Endothelial cell of umbilical vein (primary cell): ENCODE measurements at regions of chr3 and their contacts with region 1.

Region 1: DNA sequence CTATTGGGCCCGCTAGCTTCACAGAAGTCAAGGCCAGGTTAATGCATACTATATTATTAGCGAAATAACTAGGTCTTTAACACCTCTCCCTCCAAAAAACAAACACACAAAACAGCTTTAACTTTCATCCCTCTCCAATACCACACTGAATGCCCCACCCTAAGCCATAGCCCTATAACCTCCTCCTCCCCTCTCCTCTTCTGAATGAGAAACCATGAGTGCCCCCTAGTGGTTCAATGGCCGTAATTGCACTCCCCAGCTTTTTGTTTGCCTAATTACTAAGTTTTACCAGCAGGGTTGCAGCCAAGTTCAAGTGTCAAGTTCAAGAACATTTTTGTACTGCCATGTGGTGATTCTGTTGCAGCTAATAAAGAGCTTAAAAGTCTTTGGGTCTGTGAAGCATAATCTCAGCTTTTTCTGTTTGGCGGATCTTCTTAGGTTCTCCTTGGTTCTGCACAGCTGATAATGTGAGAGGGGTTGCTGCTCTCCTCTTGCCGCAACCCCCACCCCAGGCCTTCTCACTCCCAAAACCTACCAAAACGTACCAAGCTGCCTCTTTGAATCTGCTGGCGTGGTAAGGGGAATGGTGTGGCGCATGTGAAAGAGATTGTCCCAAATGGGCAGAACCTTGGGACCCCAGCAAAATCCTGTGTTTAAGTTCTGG is 57.9 kb downstream of the RPL22L1 start:
- DNase-seq: peak; percentile 86
- H3K4me3 ChIP-seq: no peak overlapping the region
- H3K27ac ChIP-seq: peak overlapping the region; percentile 51
- H3K4me1 ChIP-seq: peaks cover 35% of the 10 kb centered on the region
- H3K27me3 ChIP-seq: no peaks in the 10 kb centered on the region
- CTCF ChIP-seq: peak; percentile 80 to 92
- POLR2A ChIP-seq: no peak

Region 2: DNA sequence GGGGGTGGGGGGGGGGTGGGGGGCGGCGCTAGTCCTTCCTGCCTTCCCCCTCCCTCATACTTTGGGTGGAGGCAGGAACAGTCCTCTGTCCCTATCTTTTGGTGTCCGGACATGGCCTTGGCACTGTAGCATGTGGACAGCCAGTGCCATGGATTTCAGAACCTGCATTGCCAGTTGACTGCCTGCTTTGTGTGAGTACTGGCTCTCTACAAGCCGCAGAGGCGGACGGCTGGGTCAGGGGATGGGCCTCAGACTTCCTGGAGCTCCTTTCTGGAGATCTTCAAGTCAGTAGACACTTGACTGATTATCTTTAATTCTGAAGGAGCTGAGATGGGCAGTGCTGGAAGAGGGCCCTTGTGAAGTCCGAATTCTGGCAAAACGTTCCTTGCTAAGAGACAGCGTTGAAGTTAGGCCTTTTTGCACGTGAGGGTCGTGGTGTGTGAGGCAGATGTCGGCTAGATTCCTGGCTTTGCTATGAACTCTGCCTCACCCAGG is 390.9 kb before region 1 on chr3:
- CTCF ChIA-PET with region 1: interaction called, 525 read pairs
- POLR2A ChIA-PET with region 1: interaction called, 8 read pairs
- dilution Hi-C with region 1: no loop called
- intact Hi-C with region 1: loop called (anchors 1 kb)
- DNase-seq: peak; percentile 21
- H3K4me3 ChIP-seq: peak overlapping the region in 2 of 3 experiments; percentile 65 to 86
- H3K27ac ChIP-seq: peak overlapping the region; percentile 46
- H3K4me1 ChIP-seq: peaks cover 53% of the 10 kb centered on the region
- H3K27me3 ChIP-seq: no peaks in the 10 kb centered on the region
- CTCF ChIP-seq: no peak
- POLR2A ChIP-seq: peak; percentile 52

Region 3: DNA sequence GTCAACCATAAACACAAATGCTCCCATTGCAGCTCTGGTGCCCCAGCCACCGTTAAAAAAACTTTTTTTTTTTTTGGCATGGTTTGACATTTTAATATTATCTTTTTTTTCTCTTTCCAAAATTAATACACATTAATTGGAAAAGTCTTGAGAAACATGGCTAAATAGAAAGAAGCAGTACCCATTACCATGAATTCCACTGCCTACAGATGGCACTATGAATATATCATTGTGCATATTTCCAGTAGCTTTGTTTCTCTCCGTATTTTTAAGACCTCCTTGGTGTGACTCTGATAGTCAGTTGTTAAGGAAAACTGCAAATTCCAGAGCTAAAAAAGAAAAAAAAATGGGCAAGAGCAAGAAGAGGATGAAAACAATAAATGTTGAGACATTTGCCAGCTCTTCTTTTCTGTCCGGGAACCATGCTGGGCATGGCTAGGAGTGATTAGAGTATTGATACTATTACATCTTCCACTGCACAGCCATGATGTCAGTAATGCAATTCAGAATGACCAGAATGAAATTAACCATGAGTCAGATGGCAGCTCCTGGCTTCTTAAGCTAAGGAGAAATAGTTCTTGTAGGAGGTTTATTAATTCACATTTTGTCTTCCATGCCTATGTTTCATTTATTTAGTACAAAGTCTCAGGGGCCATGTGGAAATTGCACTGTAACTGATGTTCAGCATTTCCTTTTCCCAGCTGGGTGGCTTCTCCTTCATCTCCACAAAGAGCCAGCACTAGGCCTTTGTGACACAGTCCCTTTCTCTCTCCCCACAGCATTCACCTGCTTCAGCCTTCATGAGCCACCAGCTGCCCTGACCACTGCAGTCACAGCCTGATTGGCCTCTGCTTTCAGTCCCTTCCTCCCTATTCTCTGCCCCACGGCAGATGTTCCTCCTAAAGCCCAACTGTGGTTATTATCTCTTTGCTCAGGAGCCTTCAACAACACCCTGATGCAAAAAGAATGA is 258.0 kb before region 1 on chr3:
- CTCF ChIA-PET with region 1: interaction called, 63 read pairs
- POLR2A ChIA-PET with region 1: no interaction called
- dilution Hi-C with region 1: no loop called
- intact Hi-C with region 1: no loop called
- DNase-seq: peak; percentile 25
- H3K4me3 ChIP-seq: no peak overlapping the region
- H3K27ac ChIP-seq: no peak overlapping the region
- H3K4me1 ChIP-seq: no peaks in the 10 kb centered on the region
- H3K27me3 ChIP-seq: no peaks in the 10 kb centered on the region
- CTCF ChIP-seq: no peak
- POLR2A ChIP-seq: no peak

Region 4: GRCh38 chr3:170703121-170703588 is 108.9 kb before region 1 on chr3:
- CTCF ChIA-PET with region 1: interaction called, 11 read pairs
- POLR2A ChIA-PET with region 1: interaction called, 8 read pairs
- dilution Hi-C with region 1: no loop called
- intact Hi-C with region 1: no loop called
- DNase-seq: peak; percentile 56
- H3K4me3 ChIP-seq: no peak overlapping the region
- H3K27ac ChIP-seq: peak overlapping the region; percentile 26
- H3K4me1 ChIP-seq: peaks cover 9% of the 10 kb centered on the region
- H3K27me3 ChIP-seq: no peaks in the 10 kb centered on the region
- CTCF ChIP-seq: no peak
- POLR2A ChIP-seq: no peak

Region 5: DNA sequence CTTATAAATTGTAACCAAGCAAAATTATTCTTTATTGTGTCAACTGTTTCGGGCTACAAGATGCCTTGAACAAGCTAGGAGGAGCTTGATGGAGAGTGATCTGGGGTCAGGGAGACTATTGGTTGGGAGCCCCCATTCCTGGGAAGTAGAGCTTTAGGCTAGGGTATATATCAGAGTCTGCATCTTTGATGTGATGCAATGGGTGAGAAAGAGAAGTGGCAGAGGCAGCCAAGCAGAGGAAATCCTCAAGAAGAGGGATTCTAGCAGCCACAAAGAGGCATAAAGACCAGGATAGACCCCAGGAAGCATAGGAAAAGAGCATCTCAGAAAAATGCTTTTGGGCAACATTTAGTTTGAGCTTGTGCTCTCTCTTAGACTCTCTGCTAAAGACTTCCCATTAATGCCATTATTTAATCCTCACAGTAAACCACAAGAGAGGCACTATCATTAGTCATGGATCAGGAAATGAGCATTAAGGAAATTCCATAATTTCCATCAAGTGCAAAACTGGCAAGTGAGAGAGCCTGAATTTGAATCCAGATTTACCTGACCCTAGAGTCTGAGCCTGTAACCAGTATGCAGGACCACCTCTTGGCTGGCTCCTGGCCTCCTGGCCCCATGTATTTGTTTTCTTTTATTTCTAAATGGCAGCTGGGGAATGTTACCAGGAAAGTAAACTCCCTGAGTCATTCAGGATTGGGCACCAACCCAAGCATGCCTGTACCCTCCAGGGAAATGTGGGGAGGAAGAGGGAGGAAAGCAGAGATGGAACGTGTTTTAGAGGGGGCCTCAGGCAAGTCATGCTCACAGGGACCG is 60.8 kb before region 1 on chr3:
- CTCF ChIA-PET with region 1: interaction called, 23 read pairs
- POLR2A ChIA-PET with region 1: interaction called, 9 read pairs
- dilution Hi-C with region 1: no loop called
- intact Hi-C with region 1: loop called (anchors 1 kb)
- DNase-seq: peak; percentile 95
- H3K4me3 ChIP-seq: no peak overlapping the region
- H3K27ac ChIP-seq: peak overlapping the region; percentile 95
- H3K4me1 ChIP-seq: peaks cover 77% of the 10 kb centered on the region
- H3K27me3 ChIP-seq: no peaks in the 10 kb centered on the region
- CTCF ChIP-seq: no peak
- POLR2A ChIP-seq: no peak

Region 6: GRCh38 chr3:170848292-170848917 is 36.3 kb after region 1 on chr3:
- CTCF ChIA-PET with region 1: interaction called, 77 read pairs
- POLR2A ChIA-PET with region 1: no interaction called
- dilution Hi-C with region 1: no loop called
- intact Hi-C with region 1: loop called (anchors 5 kb)
- DNase-seq: peak; percentile 38
- H3K4me3 ChIP-seq: no peak overlapping the region
- H3K27ac ChIP-seq: no peak overlapping the region
- H3K4me1 ChIP-seq: no peaks in the 10 kb centered on the region
- H3K27me3 ChIP-seq: no peaks in the 10 kb centered on the region
- CTCF ChIP-seq: peak in 1 of 2 donors; percentile 14
- POLR2A ChIP-seq: no peak